Naive thymus-derived CD4-positive, alpha-beta T cell (primary cell): ENCODE measurements at regions of chr17 and their contacts with region 1.

Region 1: GRCh38 chr17:32519228-32520103 is 32.7 kb downstream of the CDK5R1 start:
- DNase-seq: peak; percentile 23 to 73 (median 46)
- ATAC-seq: peak; percentile 64
- H3K4me3 ChIP-seq: peak overlapping the region; percentile 50
- H3K4me3 Mint-ChIP-seq: peak overlapping the region; percentile 76 to 96 (median 88)
- H3K27ac ChIP-seq: peak overlapping the region; percentile 60
- H3K27ac Mint-ChIP-seq: peak overlapping the region; percentile 88 to 99 (median 93)
- H3K4me1 ChIP-seq: peaks cover 53 to 66% of the 10 kb centered on the region in 2 donors
- H3K4me1 Mint-ChIP-seq: peaks cover 40 to 83% (median 78%) of the 10 kb centered on the region in 7 donors
- H3K27me3 ChIP-seq: no peaks in the 10 kb centered on the region
- H3K27me3 Mint-ChIP-seq: no peaks in the 10 kb centered on the region

Region 2: DNA sequence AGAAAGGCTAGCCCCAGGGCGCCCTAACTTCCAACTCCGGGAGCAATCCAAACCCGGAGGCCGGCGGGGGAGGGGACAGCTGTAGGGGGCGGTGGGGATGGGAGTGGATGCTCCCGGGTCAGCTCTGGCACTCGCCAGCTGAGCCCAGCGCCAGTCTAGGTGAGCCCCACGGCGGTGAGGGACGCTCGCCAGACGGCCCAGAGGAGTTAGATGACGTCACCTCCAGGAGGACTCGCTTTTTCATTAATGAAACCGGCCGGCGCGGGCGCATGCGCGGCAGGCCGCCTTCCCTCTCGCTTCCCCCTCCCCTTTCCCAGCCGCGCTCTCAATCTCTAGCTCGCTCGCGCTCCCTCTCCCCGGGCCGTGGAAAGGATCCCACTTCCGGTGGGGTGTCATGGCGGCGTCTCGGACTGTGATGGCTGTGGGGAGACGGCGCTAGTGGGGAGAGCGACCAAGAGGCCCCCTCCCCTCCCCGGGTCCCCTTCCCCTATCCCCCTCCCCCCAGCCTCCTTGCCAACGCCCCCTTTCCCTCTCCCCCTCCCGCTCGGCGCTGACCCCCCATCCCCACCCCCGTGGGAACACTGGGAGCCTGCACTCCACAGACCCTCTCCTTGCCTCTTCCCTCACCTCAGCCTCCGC is 1424.7 kb before region 1 on chr17 and contains the start of gene NF1:
- CTCF ChIA-PET with region 1: no interaction called
- POLR2A ChIA-PET with region 1: no interaction called
- intact Hi-C with region 1: loop called in 1 of 2 experiments (anchors 5 kb)
- DNase-seq: peak; percentile 57 to 86 (median 72)
- ATAC-seq: peak; percentile 88
- H3K4me3 ChIP-seq: peak within 1 kb of the TSS; percentile 71
- H3K4me3 Mint-ChIP-seq: peak within 1 kb of the TSS; percentile 83 to 98 (median 94)
- H3K27ac ChIP-seq: peak within 1 kb of the TSS; percentile 76
- H3K27ac Mint-ChIP-seq: peak within 1 kb of the TSS; percentile 80 to 97 (median 92)
- H3K4me1 ChIP-seq: peaks cover 0 to 8% of the 10 kb centered on the region in 2 donors
- H3K4me1 Mint-ChIP-seq: peaks cover 10 to 22% (median 13%) of the 10 kb centered on the region in 7 donors
- H3K27me3 ChIP-seq: no peaks in the 10 kb centered on the region
- H3K27me3 Mint-ChIP-seq: no peaks in the 10 kb centered on the region
- total RNA-seq, gene NF1: 18.8 to 32.4 (median 21.2) TPM

Region 3: GRCh38 chr17:32461853-32462617 is 57.4 kb before region 1 on chr17:
- CTCF ChIA-PET with region 1: interaction called, 6 read pairs
- POLR2A ChIA-PET with region 1: interaction called, 3 read pairs
- intact Hi-C with region 1: loop called in 1 of 2 experiments (anchors 1 kb)
- DNase-seq: peak; percentile 27 to 71 (median 63)
- ATAC-seq: peak; percentile 91
- H3K4me3 ChIP-seq: no peak overlapping the region
- H3K4me3 Mint-ChIP-seq: peak overlapping the region in 1 of 10 donors; percentile 15
- H3K27ac ChIP-seq: no peak overlapping the region
- H3K27ac Mint-ChIP-seq: peak overlapping the region in 7 of 9 donors; percentile 0 to 87 (median 19)
- H3K4me1 ChIP-seq: peaks cover 8 to 9% of the 10 kb centered on the region in 2 donors
- H3K4me1 Mint-ChIP-seq: peaks cover 25 to 43% (median 31%) of the 10 kb centered on the region in 7 donors
- H3K27me3 ChIP-seq: no peaks in the 10 kb centered on the region
- H3K27me3 Mint-ChIP-seq: no peaks in the 10 kb centered on the region

Region 4: GRCh38 chr17:32503251-32504165 is 16.0 kb before region 1 on chr17:
- CTCF ChIA-PET with region 1: interaction called, 20 read pairs
- POLR2A ChIA-PET with region 1: interaction called, 135 read pairs
- intact Hi-C with region 1: loop called (anchors 1 kb)
- DNase-seq: peak in 8 of 9 donors; percentile 45 to 83 (median 78)
- ATAC-seq: peak; percentile 94
- H3K4me3 ChIP-seq: peak overlapping the region; percentile 36
- H3K4me3 Mint-ChIP-seq: peak overlapping the region; percentile 64 to 83 (median 73)
- H3K27ac ChIP-seq: peak overlapping the region; percentile 70
- H3K27ac Mint-ChIP-seq: peak overlapping the region; percentile 93 to 100 (median 98)
- H3K4me1 ChIP-seq: peaks cover 45 to 70% of the 10 kb centered on the region in 2 donors
- H3K4me1 Mint-ChIP-seq: peaks cover 50 to 91% (median 77%) of the 10 kb centered on the region in 7 donors
- H3K27me3 ChIP-seq: no peaks in the 10 kb centered on the region
- H3K27me3 Mint-ChIP-seq: no peaks in the 10 kb centered on the region

Region 5: DNA sequence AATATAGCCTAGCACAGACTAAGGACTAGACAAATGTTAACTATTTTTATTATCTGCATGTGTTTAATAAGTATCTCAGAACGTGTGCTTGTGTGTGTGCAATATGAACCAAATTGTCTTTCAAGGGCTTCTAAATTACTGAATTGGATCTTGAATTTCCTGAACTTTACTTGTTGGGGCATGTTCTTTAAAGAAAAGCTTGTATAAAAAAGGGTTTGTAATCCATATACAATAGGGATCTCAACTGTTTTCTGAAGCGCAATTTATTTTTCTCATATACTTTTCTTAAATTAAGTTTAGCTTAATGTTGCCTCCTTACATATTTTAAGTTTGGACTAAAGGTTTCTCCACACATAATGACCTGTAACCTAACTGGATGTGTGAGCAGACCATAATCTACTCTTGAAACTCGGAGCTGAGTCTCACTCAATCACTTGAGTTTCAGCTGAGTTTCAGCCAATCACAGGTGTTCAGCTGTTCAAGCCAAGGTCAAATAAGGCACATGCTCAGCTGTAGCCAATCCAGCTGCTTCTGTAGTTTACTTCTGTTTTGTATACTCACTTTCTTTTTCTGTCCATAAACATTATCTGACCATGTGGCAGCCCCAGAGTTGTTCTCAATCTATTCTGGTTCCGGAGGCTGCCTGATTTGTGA is 39.7 kb after region 1 on chr17:
- CTCF ChIA-PET with region 1: interaction called, 3 read pairs
- POLR2A ChIA-PET with region 1: interaction called, 3 read pairs
- intact Hi-C with region 1: loop called (anchors 5 kb)
- DNase-seq: no peak
- ATAC-seq: peak; percentile 46
- H3K4me3 ChIP-seq: no peak overlapping the region
- H3K4me3 Mint-ChIP-seq: peak overlapping the region in 5 of 10 donors; percentile 65 to 84 (median 69)
- H3K27ac ChIP-seq: no peak overlapping the region
- H3K27ac Mint-ChIP-seq: peak overlapping the region in 6 of 9 donors; percentile 16 to 86 (median 66)
- H3K4me1 ChIP-seq: peaks cover 7% of the 10 kb centered on the region in 2 donors
- H3K4me1 Mint-ChIP-seq: peaks cover 0 to 38% (median 34%) of the 10 kb centered on the region in 7 donors
- H3K27me3 ChIP-seq: no peaks in the 10 kb centered on the region
- H3K27me3 Mint-ChIP-seq: no peaks in the 10 kb centered on the region